ENCODE measurements at regions of chr7 and their contacts with region 1.

Region 1: DNA sequence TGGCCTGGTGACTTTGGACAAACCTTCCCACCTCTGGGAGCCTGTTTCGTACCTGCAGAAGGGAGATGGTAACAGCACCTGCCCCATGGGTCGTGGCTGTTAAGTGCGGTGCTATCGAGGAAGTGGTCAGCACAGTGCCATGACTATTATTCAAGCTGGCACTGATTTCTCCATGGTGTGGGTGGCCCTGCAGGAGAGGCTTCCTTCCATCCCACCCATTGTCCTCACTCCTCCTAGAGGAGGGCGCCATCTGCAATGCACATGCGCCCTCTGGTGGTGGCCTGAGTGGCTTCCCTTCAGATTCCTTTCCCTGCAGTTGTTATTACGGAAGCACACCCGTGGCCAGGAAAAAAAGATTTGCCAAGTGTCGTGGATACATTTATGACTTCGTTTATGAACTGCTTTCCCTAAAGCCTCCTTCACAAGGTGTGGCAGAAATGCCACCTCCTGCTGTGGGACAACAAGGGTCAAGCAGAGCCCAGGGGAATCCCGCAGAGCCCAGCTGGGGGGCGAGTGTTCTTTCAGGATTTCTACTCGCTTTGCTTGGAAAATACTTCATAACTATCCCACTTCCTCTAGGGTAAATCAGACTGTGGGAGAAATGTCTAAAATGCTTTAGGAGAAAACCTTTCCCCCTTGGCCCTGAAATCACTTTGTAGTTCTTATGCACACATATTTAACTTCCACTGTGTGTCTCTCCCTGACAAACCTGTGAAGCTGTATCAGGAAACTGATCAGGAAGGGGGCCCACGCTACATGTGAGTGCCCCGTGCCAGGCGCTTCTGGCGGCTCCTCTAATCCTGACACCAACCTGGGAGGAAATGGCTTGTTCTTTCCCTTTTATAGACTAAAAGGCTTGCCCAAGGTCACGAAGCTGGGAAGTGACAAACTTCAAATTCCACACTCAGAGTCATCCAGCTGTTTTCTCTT is 98.0 kb upstream of the ANLN start:
- DNase-seq: peak; percentile 90
- H3K4me3 ChIP-seq: peak overlapping the region in 3 of 4 donors; percentile 12 to 25 (median 13)
- H3K27ac ChIP-seq: peak overlapping the region; percentile 84 to 88 (median 86)
- H3K4me1 ChIP-seq: peaks cover 16 to 55% (median 34%) of the 10 kb centered on the region in 4 donors
- H3K27me3 ChIP-seq: no peaks in the 10 kb centered on the region
- CTCF ChIP-seq: peak; percentile 96 to 99 (median 98)
- EP300 ChIP-seq: no peak
- POLR2A ChIP-seq: peak; percentile 61

Region 2: GRCh38 chr7:35985126-35985754 is 306.4 kb before region 1 on chr7:
- in situ Hi-C with region 1: loop called in 3 of 4 experiments (anchors 5 to 10 kb)
- intact Hi-C with region 1: loop called (anchors 2 kb)
- DNase-seq: peak; percentile 84
- H3K4me3 ChIP-seq: no peak overlapping the region
- H3K27ac ChIP-seq: no peak overlapping the region
- H3K4me1 ChIP-seq: no peaks in the 10 kb centered on the region
- H3K27me3 ChIP-seq: no peaks in the 10 kb centered on the region
- CTCF ChIP-seq: peak; percentile 85 to 94 (median 88)
- EP300 ChIP-seq: no peak
- POLR2A ChIP-seq: no peak

Region 3: DNA sequence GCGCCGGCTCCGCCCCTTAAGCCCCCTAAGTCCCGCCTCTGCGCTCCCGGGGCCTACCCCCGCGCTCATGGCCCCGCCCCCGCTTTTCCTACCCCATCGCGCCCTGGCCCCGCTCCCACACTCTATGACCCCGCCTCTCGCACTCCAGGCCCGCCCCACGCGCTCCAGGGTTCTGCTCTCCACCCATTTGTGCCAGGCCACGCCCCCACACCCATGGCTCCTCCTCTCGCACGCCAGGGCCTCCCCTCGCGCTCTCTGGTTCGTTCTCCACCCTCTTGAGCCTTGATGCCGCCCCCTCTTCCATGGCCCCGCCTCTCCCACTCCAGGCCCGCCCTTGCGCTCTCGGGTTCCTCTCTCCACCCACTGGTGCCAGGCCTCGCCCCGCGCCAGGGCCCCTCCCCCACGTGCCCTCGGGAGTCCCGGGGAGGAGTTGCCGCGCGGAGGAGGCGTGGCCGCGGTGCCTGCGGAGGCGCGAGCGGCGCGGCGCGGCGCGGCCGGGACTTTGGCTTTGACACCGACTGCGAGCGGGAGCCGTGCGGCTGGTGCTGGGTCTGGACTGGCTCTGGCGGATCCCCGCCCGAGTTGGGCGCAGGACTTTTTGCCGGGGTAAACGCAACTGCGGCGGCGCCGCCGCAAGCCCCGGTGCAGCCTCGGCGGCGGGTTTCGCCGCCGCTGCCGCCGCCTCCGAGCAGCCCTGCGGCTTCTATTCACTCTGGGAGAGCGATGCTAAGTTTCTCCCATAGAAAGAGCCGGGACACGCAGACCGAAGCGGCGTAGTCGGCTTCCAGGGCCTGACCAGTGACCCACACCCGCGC is 138.7 kb before region 1 on chr7 and contains the start of gene EEPD1:
- in situ Hi-C with region 1: loop called in 1 of 4 experiments (anchors 25 kb)
- intact Hi-C with region 1: loop called (anchors 5 kb)
- DNase-seq: peak; percentile 100
- H3K4me3 ChIP-seq: peak within 1 kb of the TSS; percentile 63 to 89 (median 76)
- H3K27ac ChIP-seq: peak within 1 kb of the TSS; percentile 92 to 95 (median 94)
- H3K4me1 ChIP-seq: peaks cover 20 to 50% (median 42%) of the 10 kb centered on the region in 4 donors
- H3K27me3 ChIP-seq: no peaks in the 10 kb centered on the region
- CTCF ChIP-seq: no peak
- EP300 ChIP-seq: no peak
- POLR2A ChIP-seq: peak; percentile 81
- total RNA-seq, gene EEPD1: 16.2 to 36.2 (median 25.2) TPM

Region 4: DNA sequence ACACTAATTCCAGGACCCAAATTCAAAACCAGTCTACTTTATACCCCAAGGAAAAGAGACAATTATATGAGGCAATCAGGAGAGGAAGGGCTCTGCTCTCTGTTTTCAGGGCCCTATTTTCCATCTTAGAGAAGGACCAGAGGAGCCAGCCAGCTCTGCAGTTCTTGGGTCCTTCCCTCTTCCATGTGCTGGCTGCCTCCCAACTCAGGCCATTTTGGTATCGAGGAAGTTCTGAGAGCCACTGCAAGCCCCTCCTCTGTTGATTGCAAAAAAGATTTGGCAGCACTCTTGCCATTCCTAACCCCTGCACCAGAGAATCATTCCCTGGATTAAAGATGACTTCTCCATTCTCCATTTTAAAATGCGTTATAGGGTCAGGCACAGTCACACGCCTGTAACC is 281.4 kb after region 1 on chr7:
- in situ Hi-C with region 1: no loop called
- intact Hi-C with region 1: no loop called
- DNase-seq: no peak
- H3K4me3 ChIP-seq: no peak overlapping the region
- H3K27ac ChIP-seq: no peak overlapping the region
- H3K4me1 ChIP-seq: no peaks in the 10 kb centered on the region
- H3K27me3 ChIP-seq: no peaks in the 10 kb centered on the region
- CTCF ChIP-seq: no peak
- EP300 ChIP-seq: no peak
- POLR2A ChIP-seq: no peak